CD4-positive, alpha-beta memory T cell (primary cell): ENCODE measurements at regions of chr20 and their contacts with region 1.

Region 1: DNA sequence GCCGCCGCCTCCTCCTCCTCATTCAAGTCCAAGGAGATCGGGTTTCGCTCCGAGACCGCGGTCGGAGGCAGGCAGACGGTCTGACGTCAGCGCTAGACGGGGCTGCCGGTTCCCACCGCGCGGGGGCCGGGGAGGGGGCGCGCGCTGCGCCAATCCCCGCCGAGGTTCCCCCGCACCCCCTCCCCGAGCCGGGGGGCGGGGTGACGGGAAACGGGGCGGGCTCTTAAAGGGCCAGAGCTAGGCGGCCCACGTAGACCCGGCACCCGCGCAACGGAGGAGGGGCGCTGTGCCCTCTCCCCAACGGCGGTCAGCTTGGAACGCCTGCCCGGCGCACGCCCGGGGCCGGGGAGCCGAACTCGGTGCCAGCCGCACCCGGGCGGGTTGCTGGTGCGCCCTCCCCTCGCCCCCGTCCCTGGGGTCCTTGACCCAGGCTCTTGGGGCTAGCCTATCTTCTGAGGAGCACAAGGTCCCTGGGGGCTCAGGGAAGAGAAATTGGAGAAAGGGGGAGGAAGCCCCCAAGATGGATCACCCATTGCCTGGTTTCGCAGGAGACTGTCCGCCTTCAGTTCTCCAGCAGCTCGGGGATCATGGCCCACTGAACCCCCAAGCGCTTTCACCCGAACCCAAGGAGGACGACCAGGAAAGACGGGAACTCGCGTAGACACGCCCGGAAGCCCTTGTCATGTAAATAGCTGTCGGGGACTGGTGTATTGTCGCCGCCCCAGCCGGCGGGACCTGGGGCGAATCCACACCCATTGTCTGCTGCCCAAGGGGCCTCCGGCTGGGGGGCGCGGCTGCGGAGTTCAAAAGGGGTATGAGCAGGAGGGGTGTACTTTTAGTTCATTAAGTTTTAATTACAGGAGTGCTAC is at the start of gene PMEPA1:
- DNase-seq: peak; percentile 91 to 96 (median 92)
- H3K4me3 ChIP-seq: peak within 1 kb of the TSS; percentile 81 to 87
- H3K4me3 Mint-ChIP-seq: peak within 1 kb of the TSS; percentile 87 to 94 (median 91)
- H3K27ac ChIP-seq: peak within 1 kb of the TSS; percentile 67
- H3K27ac Mint-ChIP-seq: peak within 1 kb of the TSS; percentile 92 to 98 (median 96)
- H3K4me1 ChIP-seq: peaks cover 17% of the 10 kb centered on the region
- H3K4me1 Mint-ChIP-seq: peaks cover 16 to 47% (median 27%) of the 10 kb centered on the region in 4 donors
- H3K27me3 ChIP-seq: no peaks in the 10 kb centered on the region
- H3K27me3 Mint-ChIP-seq: peaks cover 3 to 10% of the 10 kb centered on the region in 2 donors
- total RNA-seq, gene PMEPA1: 8.1 to 8.9 TPM

Region 2: DNA sequence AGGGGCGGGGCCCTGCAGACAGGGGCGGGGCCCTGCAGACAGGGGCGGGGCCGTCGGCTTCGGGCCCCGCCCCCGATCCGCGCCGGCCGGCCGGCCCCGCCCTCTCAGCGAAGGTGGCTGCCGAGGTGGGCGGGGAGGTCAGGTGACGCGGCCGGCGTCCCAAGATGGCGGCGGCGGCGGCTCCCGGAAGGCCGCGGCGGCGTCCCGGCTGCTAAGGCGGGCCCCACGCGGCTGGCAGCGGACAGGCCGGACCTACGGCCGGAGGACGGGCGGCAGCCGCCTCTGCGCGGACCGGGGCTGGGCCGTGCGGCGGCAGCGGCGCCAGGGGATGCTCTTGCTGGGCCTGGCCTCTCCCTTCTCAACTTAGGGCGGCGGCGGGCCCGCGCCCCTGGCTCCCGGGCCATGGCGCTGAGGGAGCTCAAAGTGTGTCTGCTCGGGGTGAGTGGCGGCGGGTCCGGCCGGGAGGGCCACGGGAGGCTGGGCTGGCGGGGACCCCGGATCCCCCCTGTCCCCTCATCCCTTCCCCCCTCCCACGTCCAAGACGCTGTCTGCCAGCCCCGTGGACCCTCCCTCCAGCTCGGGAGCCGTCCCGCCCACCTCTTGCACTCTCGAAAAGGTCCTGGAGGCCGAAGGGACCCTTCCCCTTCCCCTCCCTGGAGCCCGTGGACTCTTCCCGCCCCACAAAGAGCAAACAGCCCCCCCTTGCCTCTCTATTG is 599.6 kb after region 1 on chr20 and contains the start of gene RAB22A:
- CTCF ChIA-PET with region 1: no interaction called
- POLR2A ChIA-PET with region 1: no interaction called
- intact Hi-C with region 1: loop called (anchors 5 kb)
- DNase-seq: peak; percentile 77 to 88 (median 83)
- H3K4me3 ChIP-seq: peak within 1 kb of the TSS; percentile 62 to 72
- H3K4me3 Mint-ChIP-seq: peak within 1 kb of the TSS; percentile 88 to 98 (median 94)
- H3K27ac ChIP-seq: peak within 1 kb of the TSS; percentile 87
- H3K27ac Mint-ChIP-seq: peak within 1 kb of the TSS; percentile 95 to 99 (median 99)
- H3K4me1 ChIP-seq: peaks cover 68% of the 10 kb centered on the region
- H3K4me1 Mint-ChIP-seq: peaks cover 40 to 71% (median 56%) of the 10 kb centered on the region in 4 donors
- H3K27me3 ChIP-seq: no peaks in the 10 kb centered on the region
- H3K27me3 Mint-ChIP-seq: no peaks in the 10 kb centered on the region
- total RNA-seq, gene RAB22A: 23.6 TPM